ENCODE measurements at regions of chr6 and their contacts with region 1.

Region 1: DNA sequence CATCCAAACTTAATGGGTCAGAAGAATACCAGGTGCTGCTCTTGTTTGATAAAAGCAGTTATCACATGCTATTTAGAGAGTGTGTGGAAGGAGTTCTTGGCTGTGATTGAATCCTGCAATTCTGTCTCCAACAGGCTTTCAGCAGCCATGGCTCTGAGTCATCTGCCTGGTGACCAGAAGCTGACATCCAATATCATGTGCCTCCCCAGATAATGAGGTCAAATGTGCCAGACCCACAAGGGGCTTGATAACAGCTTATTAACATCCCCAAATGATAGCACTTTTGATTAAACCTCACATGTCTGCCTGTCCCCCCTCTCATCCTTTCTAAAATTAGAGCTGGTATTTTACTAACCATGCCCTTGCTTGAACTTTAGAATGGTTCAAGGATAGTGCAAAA is 175.7 kb upstream of the PLN start:
- DNase-seq: peak in 4 of 5 donors; percentile 68 to 85 (median 80)
- ATAC-seq: peak; percentile 89 to 95 (median 92)
- H3K4me3 ChIP-seq: no peak overlapping the region
- H3K27ac ChIP-seq: peak overlapping the region; percentile 51 to 93 (median 86)
- H3K4me1 ChIP-seq: peaks cover 0 to 22% (median 6%) of the 10 kb centered on the region in 12 donors
- H3K27me3 ChIP-seq: no peaks in the 10 kb centered on the region
- CTCF ChIP-seq: no peak
- POLR2A ChIP-seq: no peak

Region 2: GRCh38 chr6:118298476-118299427 is 73.7 kb before region 1 on chr6:
- intact Hi-C with region 1: loop called in 6 of 10 experiments (anchors 2 to 5 kb)
- DNase-seq: no peak
- ATAC-seq: no peak
- H3K4me3 ChIP-seq: no peak overlapping the region
- H3K27ac ChIP-seq: peak overlapping the region in 8 of 12 donors; percentile 13 to 88 (median 53)
- H3K4me1 ChIP-seq: peaks cover 0 to 30% (median 7%) of the 10 kb centered on the region in 12 donors
- H3K27me3 ChIP-seq: no peaks in the 10 kb centered on the region
- CTCF ChIP-seq: no peak
- POLR2A ChIP-seq: no peak

Region 3: DNA sequence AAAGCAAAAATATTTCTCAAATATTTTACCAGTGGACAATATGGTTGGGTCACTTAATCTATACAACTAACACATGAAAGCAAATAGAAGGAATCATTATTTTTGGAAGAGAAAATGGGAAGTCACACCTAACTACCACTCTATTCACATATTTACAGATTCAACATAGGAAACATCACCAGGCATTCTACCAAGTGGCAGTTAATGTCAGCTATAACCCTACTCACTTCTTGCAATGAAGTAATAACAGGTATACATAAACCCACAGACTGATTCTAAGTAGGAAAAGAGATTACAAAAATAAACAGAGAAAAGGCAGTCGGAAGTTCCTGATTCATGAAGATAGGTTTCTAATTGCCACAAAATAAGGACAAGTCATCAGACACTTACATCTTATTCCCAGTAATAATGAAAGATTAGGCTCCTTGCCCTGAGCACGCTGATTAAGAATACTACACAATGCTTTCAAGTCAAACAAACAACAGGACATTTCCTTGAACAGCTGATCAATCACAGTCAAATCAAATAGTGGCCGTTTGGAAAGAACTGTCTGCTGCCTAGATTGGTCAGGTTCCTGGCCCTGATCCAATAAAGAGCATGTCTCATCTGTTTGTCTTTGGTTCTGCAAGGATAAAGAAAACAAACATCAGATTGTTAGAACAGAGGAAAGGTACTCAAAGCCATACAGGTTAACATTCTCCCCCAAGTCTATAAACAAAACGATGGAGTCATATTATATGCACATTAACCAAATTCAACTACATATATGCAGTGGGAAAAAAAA is 96.5 kb after region 1 on chr6:
- intact Hi-C with region 1: loop called in 1 of 10 experiments (anchors 5 kb)
- DNase-seq: no peak
- ATAC-seq: no peak
- H3K4me3 ChIP-seq: no peak overlapping the region
- H3K27ac ChIP-seq: no peak overlapping the region
- H3K4me1 ChIP-seq: peaks cover 0 to 31% (median 0%) of the 10 kb centered on the region in 12 donors
- H3K27me3 ChIP-seq: no peaks in the 10 kb centered on the region
- CTCF ChIP-seq: no peak
- POLR2A ChIP-seq: no peak

Region 4: GRCh38 chr6:118514689-118515088 is 142.3 kb after region 1 on chr6:
- intact Hi-C with region 1: loop called in 6 of 10 experiments (anchors 2 to 10 kb)
- DNase-seq: peak; percentile 57 to 83 (median 78)
- ATAC-seq: peak; percentile 99 to 100 (median 99)
- H3K4me3 ChIP-seq: peak overlapping the region in 3 of 12 donors; percentile 21 to 33 (median 26)
- H3K27ac ChIP-seq: peak overlapping the region; percentile 49 to 87 (median 74)
- H3K4me1 ChIP-seq: peaks cover 0 to 26% (median 1%) of the 10 kb centered on the region in 12 donors
- H3K27me3 ChIP-seq: no peaks in the 10 kb centered on the region
- CTCF ChIP-seq: no peak
- POLR2A ChIP-seq: no peak

Measured in heart left ventricle (tissue), 16 donors.